Activated CD4-positive, alpha-beta memory T cell treated with anti-CD3 and anti-CD28 coated beads, Interleukin-2, amount 10 ng/mL, durations not matched to agents 7 days and 5 days (primary cell): ENCODE measurements at regions of chr10 and their contacts with region 1.

Region 1: GRCh38 chr10:63268798-63269503 is 135.8 kb downstream of the NRBF2 start:
- DNase-seq: peak; percentile 86
- H3K4me3 Mint-ChIP-seq: peak overlapping the region; percentile 93
- H3K27ac Mint-ChIP-seq: peak overlapping the region; percentile 99
- H3K4me1 Mint-ChIP-seq: peaks cover 21% of the 10 kb centered on the region
- H3K27me3 Mint-ChIP-seq: no peaks in the 10 kb centered on the region

Region 2: GRCh38 chr10:63054889-63055611 is 213.9 kb before region 1 on chr10:
- CTCF ChIA-PET with region 1: no interaction called
- POLR2A ChIA-PET with region 1: no interaction called
- DNase-seq: no peak
- H3K4me3 Mint-ChIP-seq: no peak overlapping the region
- H3K27ac Mint-ChIP-seq: no peak overlapping the region
- H3K4me1 Mint-ChIP-seq: peaks cover 3% of the 10 kb centered on the region
- H3K27me3 Mint-ChIP-seq: peaks cover 10% of the 10 kb centered on the region

Region 3: GRCh38 chr10:63068246-63068645 is 200.7 kb before region 1 on chr10:
- CTCF ChIA-PET with region 1: no interaction called
- POLR2A ChIA-PET with region 1: no interaction called
- DNase-seq: no peak
- H3K4me3 Mint-ChIP-seq: peak overlapping the region; percentile 36
- H3K27ac Mint-ChIP-seq: no peak overlapping the region
- H3K4me1 Mint-ChIP-seq: peaks cover 13% of the 10 kb centered on the region
- H3K27me3 Mint-ChIP-seq: peaks cover 45% of the 10 kb centered on the region

Region 4: GRCh38 chr10:63133056-63133820 is 135.7 kb before region 1 on chr10 and contains the start of gene NRBF2:
- CTCF ChIA-PET with region 1: no interaction called
- POLR2A ChIA-PET with region 1: interaction called, 34 read pairs
- DNase-seq: peak; percentile 98
- H3K4me3 Mint-ChIP-seq: peak within 1 kb of the TSS; percentile 91
- H3K27ac Mint-ChIP-seq: peak within 1 kb of the TSS; percentile 95
- H3K4me1 Mint-ChIP-seq: peaks cover 35% of the 10 kb centered on the region
- H3K27me3 Mint-ChIP-seq: no peaks in the 10 kb centered on the region
- total RNA-seq, gene NRBF2: 25.1 to 26.8 TPM

Region 5: DNA sequence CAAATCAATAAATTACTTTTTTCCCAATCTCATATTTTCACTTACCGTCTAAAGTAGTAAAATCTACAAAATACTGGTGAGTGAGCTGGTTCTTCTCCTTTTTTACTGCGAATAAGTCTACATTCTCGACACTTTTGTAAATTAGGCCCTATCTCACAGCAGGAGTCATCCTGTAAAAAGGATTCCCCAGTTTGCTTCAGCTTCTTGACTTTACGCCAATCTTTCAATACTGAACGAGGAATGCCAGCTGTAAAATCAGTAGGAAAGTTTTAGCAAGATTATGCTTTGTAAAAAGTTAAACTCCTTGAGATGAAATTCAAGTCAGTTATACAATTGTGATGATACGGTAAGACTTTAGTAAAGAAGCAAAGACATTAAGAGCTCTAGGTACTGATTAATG is 68.5 kb before region 1 on chr10:
- CTCF ChIA-PET with region 1: interaction called, 3 read pairs
- POLR2A ChIA-PET with region 1: interaction called, 24 read pairs
- DNase-seq: no peak
- H3K4me3 Mint-ChIP-seq: no peak overlapping the region
- H3K27ac Mint-ChIP-seq: no peak overlapping the region
- H3K4me1 Mint-ChIP-seq: peaks cover 14% of the 10 kb centered on the region
- H3K27me3 Mint-ChIP-seq: no peaks in the 10 kb centered on the region

Region 6: DNA sequence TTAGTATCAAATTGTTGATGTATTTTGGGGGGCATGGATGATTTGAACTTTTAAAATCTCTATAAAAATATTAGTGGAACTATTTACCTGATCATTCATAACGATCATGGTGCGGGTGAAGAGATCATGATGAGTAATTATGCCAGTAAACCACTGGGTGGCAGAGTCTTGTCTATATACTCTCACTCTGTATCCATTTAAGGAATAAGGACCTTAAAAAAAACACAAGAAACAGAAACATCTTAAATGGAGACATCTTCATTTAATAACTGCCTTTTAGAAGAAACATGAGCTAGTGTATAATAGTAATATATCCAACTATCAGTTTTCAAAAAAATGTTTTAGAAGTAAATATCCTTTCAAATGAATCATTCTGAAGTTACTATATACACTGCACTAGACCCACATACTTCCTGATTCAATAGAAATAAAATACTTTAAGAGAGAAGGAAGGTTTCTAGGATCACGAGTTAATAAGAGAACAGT is 51.8 kb before region 1 on chr10:
- CTCF ChIA-PET with region 1: interaction called, 7 read pairs
- POLR2A ChIA-PET with region 1: interaction called, 13 read pairs
- DNase-seq: no peak
- H3K4me3 Mint-ChIP-seq: no peak overlapping the region
- H3K27ac Mint-ChIP-seq: no peak overlapping the region
- H3K4me1 Mint-ChIP-seq: peaks cover 51% of the 10 kb centered on the region
- H3K27me3 Mint-ChIP-seq: no peaks in the 10 kb centered on the region

Region 7: DNA sequence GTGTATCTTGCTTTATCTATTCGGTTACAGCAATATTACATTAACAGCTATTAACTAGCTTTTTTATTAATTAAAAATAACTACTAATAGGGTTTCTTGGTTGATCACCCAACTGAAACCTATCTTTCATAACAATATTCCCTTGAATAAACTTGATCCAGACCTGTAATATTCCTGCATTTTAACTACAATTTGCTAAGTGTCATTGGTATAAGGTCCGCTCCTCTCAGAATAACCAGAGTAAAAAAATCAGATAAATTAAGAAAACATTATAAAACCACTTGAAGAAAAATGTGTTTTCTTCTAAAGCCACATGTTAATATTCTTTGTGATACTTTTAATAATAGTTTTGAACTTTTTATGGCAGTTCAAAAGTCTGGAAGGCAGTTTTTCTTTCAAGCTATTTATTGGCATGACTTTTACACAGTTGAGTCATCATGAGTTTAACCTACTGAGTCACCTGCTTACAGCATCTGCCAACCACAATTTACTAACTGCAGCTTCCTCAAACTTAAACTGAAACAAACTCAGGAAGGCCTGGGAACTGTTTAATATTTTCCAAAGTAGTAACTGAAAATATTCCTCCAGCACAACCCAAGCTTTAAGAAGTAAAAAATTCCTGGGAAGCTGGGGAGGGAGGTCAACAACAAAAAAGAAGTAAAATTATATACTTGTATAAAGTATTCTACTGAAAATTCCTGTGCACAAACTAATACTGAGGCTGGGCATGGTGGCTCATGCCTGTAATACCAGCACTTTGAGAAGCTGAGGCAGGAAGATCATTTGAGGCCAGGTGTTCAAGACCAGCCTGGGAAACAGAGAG is 32.6 kb before region 1 on chr10:
- CTCF ChIA-PET with region 1: interaction called, 4 read pairs
- POLR2A ChIA-PET with region 1: interaction called, 45 read pairs
- DNase-seq: no peak
- H3K4me3 Mint-ChIP-seq: peak overlapping the region; percentile 24
- H3K27ac Mint-ChIP-seq: peak overlapping the region; percentile 75
- H3K4me1 Mint-ChIP-seq: peaks cover 57% of the 10 kb centered on the region
- H3K27me3 Mint-ChIP-seq: no peaks in the 10 kb centered on the region

Region 8: DNA sequence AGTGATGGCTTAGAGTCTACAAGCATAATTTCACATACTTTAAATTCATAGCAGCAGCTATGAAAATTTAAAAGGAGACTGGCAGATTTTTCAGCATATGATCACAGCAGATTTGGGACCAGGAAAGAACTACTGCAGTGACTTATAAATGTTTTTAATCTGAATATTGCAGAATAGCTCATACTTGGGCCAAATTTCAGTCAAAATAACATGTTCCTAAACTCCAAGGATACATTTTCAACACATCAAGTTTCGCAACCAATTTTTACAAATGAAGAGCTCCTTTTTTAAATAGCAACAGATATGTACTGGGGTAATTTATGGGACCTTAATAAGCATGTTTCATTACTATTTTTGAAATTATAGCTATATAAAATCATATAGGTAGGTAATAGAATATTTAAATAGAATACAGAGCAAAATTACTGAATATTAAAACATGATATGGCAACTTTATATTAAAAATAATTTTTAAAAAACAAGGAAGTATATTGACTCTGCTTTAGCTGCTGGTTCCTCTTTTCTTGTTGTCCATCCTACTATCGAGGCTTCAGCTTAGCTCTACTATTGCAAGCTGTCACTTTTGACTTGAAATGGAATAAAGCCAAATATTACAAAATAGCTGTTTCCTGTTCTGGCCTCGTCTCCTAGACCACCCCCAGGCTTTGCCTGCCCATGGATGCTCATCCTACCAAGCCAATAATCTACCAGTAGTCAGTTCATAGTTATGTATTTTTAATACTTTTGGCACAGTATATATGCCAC is 12.8 kb before region 1 on chr10:
- CTCF ChIA-PET with region 1: interaction called, 10 read pairs
- POLR2A ChIA-PET with region 1: interaction called, 17 read pairs
- DNase-seq: no peak
- H3K4me3 Mint-ChIP-seq: no peak overlapping the region
- H3K27ac Mint-ChIP-seq: no peak overlapping the region
- H3K4me1 Mint-ChIP-seq: peaks cover 51% of the 10 kb centered on the region
- H3K27me3 Mint-ChIP-seq: no peaks in the 10 kb centered on the region

Region 9: GRCh38 chr10:63521416-63522276 is 252.7 kb after region 1 on chr10:
- CTCF ChIA-PET with region 1: interaction called, 3 read pairs
- POLR2A ChIA-PET with region 1: interaction called, 58 read pairs
- DNase-seq: peak; percentile 60
- H3K4me3 Mint-ChIP-seq: peak overlapping the region; percentile 76
- H3K27ac Mint-ChIP-seq: peak overlapping the region; percentile 87
- H3K4me1 Mint-ChIP-seq: peaks cover 64% of the 10 kb centered on the region
- H3K27me3 Mint-ChIP-seq: no peaks in the 10 kb centered on the region